Heart right ventricle (tissue), 16 donors: ENCODE measurements at regions of chr10 and their contacts with region 1.

Region 1: GRCh38 chr10:110151467-110151866 is 55.9 kb upstream of the MXI1 start:
- DNase-seq: no peak
- ATAC-seq: peak in 3 of 8 donors; percentile 14 to 20 (median 20)
- H3K4me3 ChIP-seq: no peak overlapping the region
- H3K27ac ChIP-seq: no peak overlapping the region
- H3K4me1 ChIP-seq: peaks cover 0 to 12% (median 0%) of the 10 kb centered on the region in 9 donors
- H3K27me3 ChIP-seq: peaks cover 0 to 36% (median 0%) of the 10 kb centered on the region in 7 donors
- CTCF ChIP-seq: no peak

Region 2: DNA sequence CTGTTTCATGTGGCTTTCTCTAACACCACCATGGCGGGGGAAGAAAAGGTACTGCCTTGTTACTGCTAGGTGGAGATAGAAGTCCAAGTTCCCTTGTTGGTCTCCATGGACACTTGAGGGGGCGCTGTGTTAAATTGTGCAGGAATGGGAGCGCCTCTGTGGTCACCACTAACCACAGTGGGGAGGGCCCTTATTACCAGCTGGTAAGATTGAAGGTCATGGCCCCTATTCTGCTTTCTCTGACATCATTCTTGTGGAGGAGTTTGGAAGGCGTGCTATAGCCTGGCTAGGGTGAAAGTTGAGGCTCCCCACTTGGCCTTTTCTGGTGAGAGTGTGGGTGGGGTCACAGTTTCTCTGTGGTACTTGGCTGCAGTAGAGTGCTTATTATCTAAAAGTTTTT is 41.1 kb after region 1 on chr10:
- intact Hi-C with region 1: loop called in 1 of 10 experiments (anchors 5 kb)
- DNase-seq: no peak
- ATAC-seq: peak in 6 of 8 donors; percentile 35 to 69 (median 43)
- H3K4me3 ChIP-seq: no peak overlapping the region
- H3K27ac ChIP-seq: no peak overlapping the region
- H3K4me1 ChIP-seq: peaks cover 0 to 4% (median 0%) of the 10 kb centered on the region in 9 donors
- H3K27me3 ChIP-seq: peaks cover 0 to 3% (median 0%) of the 10 kb centered on the region in 7 donors
- CTCF ChIP-seq: peak in 1 of 9 donors; percentile 27

Region 3: GRCh38 chr10:110252151-110252550 is 100.7 kb after region 1 on chr10:
- intact Hi-C with region 1: no loop called
- DNase-seq: no peak
- ATAC-seq: no peak
- H3K4me3 ChIP-seq: no peak overlapping the region
- H3K27ac ChIP-seq: no peak overlapping the region
- H3K4me1 ChIP-seq: peaks cover 0 to 29% (median 11%) of the 10 kb centered on the region in 9 donors
- H3K27me3 ChIP-seq: no peaks in the 10 kb centered on the region
- CTCF ChIP-seq: no peak

Region 4: GRCh38 chr10:110460111-110460809 is 308.8 kb after region 1 on chr10:
- intact Hi-C with region 1: no loop called
- DNase-seq: peak; percentile 29 to 34
- ATAC-seq: peak in 7 of 8 donors; percentile 34 to 59 (median 47)
- H3K4me3 ChIP-seq: no peak overlapping the region
- H3K27ac ChIP-seq: peak overlapping the region in 6 of 10 donors; percentile 21 to 56 (median 35)
- H3K4me1 ChIP-seq: peaks cover 5 to 60% (median 23%) of the 10 kb centered on the region in 9 donors
- H3K27me3 ChIP-seq: no peaks in the 10 kb centered on the region
- CTCF ChIP-seq: no peak